Naive thymus-derived CD4-positive, alpha-beta T cell (primary cell): ENCODE measurements at regions of chr6 and their contacts with region 1.

Region 1: GRCh38 chr6:11232193-11232769 is at the start of gene NEDD9:
- DNase-seq: peak; percentile 76 to 97 (median 90)
- ATAC-seq: peak; percentile 97
- H3K4me3 ChIP-seq: peak within 1 kb of the TSS; percentile 69
- H3K4me3 Mint-ChIP-seq: peak within 1 kb of the TSS; percentile 86 to 98 (median 94)
- H3K27ac ChIP-seq: peak within 1 kb of the TSS; percentile 76
- H3K27ac Mint-ChIP-seq: peak within 1 kb of the TSS; percentile 88 to 99 (median 98)
- H3K4me1 ChIP-seq: peaks cover 19 to 26% of the 10 kb centered on the region in 2 donors
- H3K4me1 Mint-ChIP-seq: peaks cover 32 to 78% (median 46%) of the 10 kb centered on the region in 7 donors
- H3K27me3 ChIP-seq: no peaks in the 10 kb centered on the region
- H3K27me3 Mint-ChIP-seq: no peaks in the 10 kb centered on the region
- total RNA-seq, gene NEDD9: 29.4 to 62.9 (median 40.2) TPM

Region 2: GRCh38 chr6:10747251-10747972 is 484.9 kb before region 1 on chr6 and contains the start of gene TMEM14B:
- CTCF ChIA-PET with region 1: no interaction called
- POLR2A ChIA-PET with region 1: no interaction called
- intact Hi-C with region 1: loop called in 1 of 2 experiments (anchors 1 kb)
- DNase-seq: peak; percentile 97 to 100 (median 99)
- ATAC-seq: peak; percentile 99
- H3K4me3 ChIP-seq: peak within 1 kb of the TSS; percentile 71
- H3K4me3 Mint-ChIP-seq: peak within 1 kb of the TSS; percentile 85 to 98 (median 91)
- H3K27ac ChIP-seq: peak within 1 kb of the TSS; percentile 79
- H3K27ac Mint-ChIP-seq: peak within 1 kb of the TSS; percentile 82 to 99 (median 96)
- H3K4me1 ChIP-seq: peaks cover 12 to 37% of the 10 kb centered on the region in 2 donors
- H3K4me1 Mint-ChIP-seq: peaks cover 24 to 67% (median 62%) of the 10 kb centered on the region in 7 donors
- H3K27me3 ChIP-seq: no peaks in the 10 kb centered on the region
- H3K27me3 Mint-ChIP-seq: no peaks in the 10 kb centered on the region
- total RNA-seq, gene TMEM14B: 48.6 to 93.8 (median 75.4) TPM

Region 3: DNA sequence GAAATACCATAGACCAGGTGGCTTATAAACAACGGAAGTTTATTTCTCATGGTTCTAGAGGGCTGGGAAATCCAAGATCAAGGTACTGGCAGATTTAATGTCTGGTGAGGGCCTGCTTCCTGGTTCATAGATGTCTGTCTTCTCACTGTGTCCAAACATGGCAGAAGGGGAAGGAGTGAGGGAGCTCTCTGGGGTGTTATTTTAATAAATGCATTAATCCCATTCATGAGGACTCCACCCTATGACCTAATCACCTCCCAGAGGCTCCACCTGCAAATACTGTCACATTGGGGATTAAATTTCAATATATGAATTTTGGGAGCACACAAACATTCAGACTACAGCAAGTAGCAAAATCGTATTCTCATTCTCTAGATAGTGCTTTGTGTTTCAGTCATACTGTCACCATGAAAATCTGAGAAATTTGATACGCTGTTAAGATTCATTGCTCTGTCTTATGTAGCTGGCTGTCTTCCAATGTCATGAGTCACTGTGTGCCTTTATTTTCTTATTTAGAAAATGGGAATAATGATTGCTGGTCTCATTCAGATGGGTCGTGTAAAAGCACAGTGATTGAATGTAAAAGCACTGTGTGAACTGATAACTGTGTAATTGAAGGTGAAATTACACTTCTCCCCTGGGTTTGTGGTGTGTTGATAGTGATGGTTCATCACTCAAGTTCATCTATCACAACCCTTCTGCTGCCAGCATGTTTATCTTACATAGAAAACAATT is 111.8 kb before region 1 on chr6:
- CTCF ChIA-PET with region 1: no interaction called
- POLR2A ChIA-PET with region 1: no interaction called
- intact Hi-C with region 1: no loop called
- DNase-seq: no peak
- ATAC-seq: no peak
- H3K4me3 ChIP-seq: no peak overlapping the region
- H3K4me3 Mint-ChIP-seq: no peak overlapping the region
- H3K27ac ChIP-seq: no peak overlapping the region
- H3K27ac Mint-ChIP-seq: no peak overlapping the region
- H3K4me1 ChIP-seq: no peaks in the 10 kb centered on the region
- H3K4me1 Mint-ChIP-seq: peaks cover 10 to 43% (median 29%) of the 10 kb centered on the region in 7 donors
- H3K27me3 ChIP-seq: no peaks in the 10 kb centered on the region
- H3K27me3 Mint-ChIP-seq: no peaks in the 10 kb centered on the region

Region 4: GRCh38 chr6:11198663-11199603 is 33.3 kb before region 1 on chr6:
- CTCF ChIA-PET with region 1: no interaction called
- POLR2A ChIA-PET with region 1: interaction called, 4 read pairs
- intact Hi-C with region 1: loop called (anchors 1 kb)
- DNase-seq: peak in 8 of 9 donors; percentile 23 to 73 (median 58)
- ATAC-seq: peak; percentile 77
- H3K4me3 ChIP-seq: no peak overlapping the region
- H3K4me3 Mint-ChIP-seq: peak overlapping the region; percentile 19 to 61 (median 52)
- H3K27ac ChIP-seq: peak overlapping the region; percentile 6
- H3K27ac Mint-ChIP-seq: peak overlapping the region; percentile 57 to 90 (median 73)
- H3K4me1 ChIP-seq: peaks cover 11 to 44% of the 10 kb centered on the region in 2 donors
- H3K4me1 Mint-ChIP-seq: peaks cover 36 to 81% (median 62%) of the 10 kb centered on the region in 7 donors
- H3K27me3 ChIP-seq: no peaks in the 10 kb centered on the region
- H3K27me3 Mint-ChIP-seq: no peaks in the 10 kb centered on the region

Region 5: GRCh38 chr6:11277275-11278206 is 45.3 kb after region 1 on chr6:
- CTCF ChIA-PET with region 1: no interaction called
- POLR2A ChIA-PET with region 1: no interaction called
- intact Hi-C with region 1: loop called (anchors 5 kb)
- DNase-seq: no peak
- ATAC-seq: peak; percentile 41
- H3K4me3 ChIP-seq: no peak overlapping the region
- H3K4me3 Mint-ChIP-seq: peak overlapping the region in 1 of 10 donors; percentile 49
- H3K27ac ChIP-seq: no peak overlapping the region
- H3K27ac Mint-ChIP-seq: peak overlapping the region in 4 of 9 donors; percentile 9 to 85 (median 27)
- H3K4me1 ChIP-seq: peaks cover 11 to 38% of the 10 kb centered on the region in 2 donors
- H3K4me1 Mint-ChIP-seq: peaks cover 30 to 56% (median 37%) of the 10 kb centered on the region in 7 donors
- H3K27me3 ChIP-seq: no peaks in the 10 kb centered on the region
- H3K27me3 Mint-ChIP-seq: no peaks in the 10 kb centered on the region

Region 6: DNA sequence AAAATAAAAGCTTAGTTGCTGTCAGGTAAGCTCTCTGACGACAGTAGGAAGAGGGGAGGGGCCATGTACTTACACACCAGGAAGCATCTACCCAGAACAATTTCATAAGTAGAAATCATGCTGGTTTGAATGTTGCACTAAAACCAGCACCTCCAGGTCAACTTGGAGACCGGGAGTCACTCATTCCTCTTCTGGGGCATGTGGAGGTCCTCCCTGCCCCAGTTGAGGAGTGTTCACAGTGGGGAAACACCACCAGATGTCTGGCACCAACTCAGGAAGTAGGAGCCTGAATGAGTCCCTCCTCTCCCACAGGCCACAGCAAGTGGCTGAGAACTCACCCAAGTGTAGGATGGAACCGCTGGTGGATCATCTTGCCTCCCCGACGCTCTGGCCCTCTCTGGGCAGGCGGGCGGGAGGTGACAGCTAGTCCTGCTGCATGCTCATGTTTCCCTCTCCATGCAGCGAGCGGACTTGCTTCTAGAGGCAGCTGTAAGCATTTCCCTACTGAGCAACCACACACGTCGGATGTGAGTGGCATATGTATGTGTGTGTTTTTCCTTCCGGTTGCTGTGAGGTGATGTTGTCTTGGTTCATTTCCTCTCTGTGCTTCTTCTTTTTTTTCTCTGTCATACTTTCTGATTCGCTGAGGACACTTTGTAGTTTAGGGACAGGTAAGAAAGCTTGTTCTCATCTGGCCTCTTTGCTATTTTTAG is 149.7 kb after region 1 on chr6:
- CTCF ChIA-PET with region 1: interaction called, 3 read pairs
- POLR2A ChIA-PET with region 1: no interaction called
- intact Hi-C with region 1: loop called (anchors 1 kb)
- DNase-seq: peak; percentile 43 to 88 (median 82)
- ATAC-seq: peak; percentile 95
- H3K4me3 ChIP-seq: peak overlapping the region; percentile 70
- H3K4me3 Mint-ChIP-seq: peak overlapping the region; percentile 76 to 96 (median 91)
- H3K27ac ChIP-seq: peak overlapping the region; percentile 79
- H3K27ac Mint-ChIP-seq: peak overlapping the region; percentile 79 to 94 (median 91)
- H3K4me1 ChIP-seq: peaks cover 23 to 28% of the 10 kb centered on the region in 2 donors
- H3K4me1 Mint-ChIP-seq: peaks cover 42 to 85% (median 66%) of the 10 kb centered on the region in 7 donors
- H3K27me3 ChIP-seq: no peaks in the 10 kb centered on the region
- H3K27me3 Mint-ChIP-seq: no peaks in the 10 kb centered on the region

Region 7: DNA sequence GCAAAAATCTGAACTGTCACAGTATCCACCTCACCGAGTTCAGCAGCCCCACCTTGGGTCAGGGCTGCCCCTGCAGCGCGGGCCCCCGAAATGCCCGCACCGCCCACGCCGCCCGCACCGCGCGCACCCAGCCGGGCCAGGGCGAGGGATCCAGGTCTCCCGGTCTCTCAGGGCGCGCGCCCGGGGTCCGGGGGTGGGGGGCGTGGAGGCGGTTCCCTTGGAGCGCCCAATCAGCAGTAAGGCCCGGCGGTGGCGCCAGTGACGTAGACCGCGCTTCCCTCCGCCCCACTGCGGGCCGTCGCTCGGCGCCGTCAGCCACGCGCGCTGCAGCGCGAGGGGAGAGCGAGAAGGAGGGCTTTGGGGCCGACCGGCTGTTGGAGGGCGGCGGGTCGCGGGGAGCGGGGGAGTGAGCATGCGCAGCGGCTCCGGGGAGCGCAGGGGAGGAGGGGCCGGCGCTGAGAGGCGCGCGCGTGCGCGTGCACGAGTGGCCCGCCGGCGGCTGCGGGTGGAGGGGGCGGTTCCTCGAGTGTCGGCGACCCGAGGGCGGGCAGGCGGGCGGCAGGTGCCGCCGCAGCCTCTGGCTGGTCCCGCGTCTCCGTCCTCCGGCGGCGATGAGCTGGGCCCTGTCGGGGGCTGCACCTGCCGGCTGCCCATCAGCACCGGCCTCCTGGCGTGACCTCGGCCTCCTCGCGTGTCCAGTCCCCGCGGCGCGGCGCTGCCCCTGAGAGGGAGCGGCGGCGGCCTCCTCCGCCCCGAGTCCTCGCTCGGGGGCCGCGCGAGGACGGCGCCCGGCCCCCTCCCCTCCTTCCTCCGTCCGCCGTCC is 305.2 kb after region 1 on chr6 and contains the start of gene TMEM170B:
- CTCF ChIA-PET with region 1: no interaction called
- POLR2A ChIA-PET with region 1: no interaction called
- intact Hi-C with region 1: loop called in 1 of 2 experiments (anchors 1 kb)
- DNase-seq: peak; percentile 94 to 99 (median 98)
- ATAC-seq: peak; percentile 95
- H3K4me3 ChIP-seq: peak within 1 kb of the TSS; percentile 62
- H3K4me3 Mint-ChIP-seq: peak within 1 kb of the TSS; percentile 82 to 90 (median 88)
- H3K27ac ChIP-seq: peak within 1 kb of the TSS; percentile 76
- H3K27ac Mint-ChIP-seq: peak within 1 kb of the TSS in 8 of 9 donors; percentile 67 to 93 (median 83)
- H3K4me1 ChIP-seq: peaks cover 4 to 5% of the 10 kb centered on the region in 2 donors
- H3K4me1 Mint-ChIP-seq: peaks cover 6 to 28% (median 19%) of the 10 kb centered on the region in 7 donors
- H3K27me3 ChIP-seq: no peaks in the 10 kb centered on the region
- H3K27me3 Mint-ChIP-seq: peaks cover 0 to 76% (median 7%) of the 10 kb centered on the region in 5 donors
- total RNA-seq, gene TMEM170B: 0.29 to 12.7 (median 3.4) TPM